ENCODE measurements at regions of chr17 and their contacts with region 1.

Region 1: GRCh38 chr17:21252796-21253645 is at the start of gene NATD1:
- DNase-seq: peak; percentile 64 to 92 (median 76)
- ATAC-seq: peak; percentile 80
- H3K4me3 ChIP-seq: peak within 1 kb of the TSS; percentile 67
- H3K4me3 Mint-ChIP-seq: peak within 1 kb of the TSS; percentile 93
- H3K27ac ChIP-seq: peak within 1 kb of the TSS; percentile 54 to 58
- H3K27ac Mint-ChIP-seq: peak within 1 kb of the TSS; percentile 94
- H3K4me1 ChIP-seq: peaks cover 27% of the 10 kb centered on the region
- H3K4me1 Mint-ChIP-seq: peaks cover 42% of the 10 kb centered on the region
- H3K27me3 ChIP-seq: no peaks in the 10 kb centered on the region
- H3K27me3 Mint-ChIP-seq: no peaks in the 10 kb centered on the region
- CTCF ChIP-seq: no peak
- total RNA-seq, gene NATD1: 5.9 to 6.1 TPM

Region 2: DNA sequence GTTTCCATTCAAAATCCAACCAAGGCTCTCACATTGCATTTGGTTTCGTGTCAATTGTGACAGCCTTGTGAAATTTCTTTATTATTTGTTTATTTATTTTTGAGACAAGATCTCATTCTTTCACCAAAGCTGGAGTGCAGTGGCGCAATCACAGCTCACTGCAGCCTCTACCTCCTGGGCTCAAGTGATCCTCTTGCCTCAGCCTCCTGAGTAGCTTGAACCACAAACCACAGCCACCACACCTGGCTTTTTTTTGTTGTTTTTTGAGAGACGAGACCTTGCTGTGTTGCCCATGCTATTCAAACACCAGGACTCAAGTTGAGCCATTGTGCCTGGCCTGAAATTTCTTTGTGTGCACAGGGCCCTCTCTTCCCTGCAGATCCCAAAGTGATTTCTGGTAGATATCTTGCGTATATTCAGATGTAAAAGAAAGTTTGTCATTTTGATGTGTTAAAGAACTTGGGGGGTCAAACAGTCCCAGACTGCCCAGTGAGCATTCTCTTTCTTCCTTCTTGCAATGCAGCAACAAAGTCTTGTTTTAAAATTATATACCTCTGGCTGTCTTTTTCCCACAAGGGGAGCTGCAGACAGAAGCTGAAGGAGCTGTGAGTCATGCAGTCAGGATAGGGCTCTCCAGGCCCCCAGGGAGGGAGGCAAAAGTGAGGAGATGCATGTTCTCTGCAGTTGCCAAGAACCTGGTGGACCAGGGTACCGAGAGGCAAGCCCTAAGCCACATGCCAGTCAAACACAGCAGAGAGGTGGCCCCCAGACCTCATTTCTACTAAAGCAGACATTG is 194.7 kb before region 1 on chr17:
- CTCF ChIA-PET with region 1: no interaction called
- POLR2A ChIA-PET with region 1: no interaction called
- intact Hi-C with region 1: no loop called
- DNase-seq: no peak
- ATAC-seq: no peak
- H3K4me3 ChIP-seq: no peak overlapping the region
- H3K4me3 Mint-ChIP-seq: no peak overlapping the region
- H3K27ac ChIP-seq: no peak overlapping the region
- H3K27ac Mint-ChIP-seq: no peak overlapping the region
- H3K4me1 ChIP-seq: no peaks in the 10 kb centered on the region
- H3K4me1 Mint-ChIP-seq: no peaks in the 10 kb centered on the region
- H3K27me3 ChIP-seq: peaks cover 0 to 4% of the 10 kb centered on the region in 2 experiments
- H3K27me3 Mint-ChIP-seq: peaks cover 13% of the 10 kb centered on the region
- CTCF ChIP-seq: no peak

Region 3: DNA sequence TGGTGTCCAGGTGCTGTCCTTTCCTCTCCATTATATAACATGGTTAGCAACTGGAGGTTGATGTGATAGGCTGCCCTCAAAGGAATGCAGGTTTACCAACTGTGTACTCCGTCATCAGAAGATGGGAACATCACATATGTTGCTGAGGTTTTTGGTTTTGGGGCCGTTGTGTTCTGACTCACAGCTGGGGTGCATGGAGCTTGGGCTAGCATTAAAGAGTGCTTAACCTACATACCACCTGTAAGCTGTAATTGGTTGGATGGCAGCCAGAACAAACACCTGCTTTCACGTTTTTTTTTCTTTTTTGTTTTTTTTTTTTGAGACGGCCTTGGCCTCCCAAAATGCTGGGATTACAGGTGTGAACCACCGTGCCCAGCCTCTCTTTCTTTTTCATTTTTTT is 60.0 kb before region 1 on chr17:
- CTCF ChIA-PET with region 1: no interaction called
- POLR2A ChIA-PET with region 1: no interaction called
- intact Hi-C with region 1: no loop called
- DNase-seq: no peak
- ATAC-seq: no peak
- H3K4me3 ChIP-seq: no peak overlapping the region
- H3K4me3 Mint-ChIP-seq: no peak overlapping the region
- H3K27ac ChIP-seq: no peak overlapping the region
- H3K27ac Mint-ChIP-seq: no peak overlapping the region
- H3K4me1 ChIP-seq: no peaks in the 10 kb centered on the region
- H3K4me1 Mint-ChIP-seq: peaks cover 6% of the 10 kb centered on the region
- H3K27me3 ChIP-seq: no peaks in the 10 kb centered on the region
- H3K27me3 Mint-ChIP-seq: no peaks in the 10 kb centered on the region
- CTCF ChIP-seq: no peak

Region 4: DNA sequence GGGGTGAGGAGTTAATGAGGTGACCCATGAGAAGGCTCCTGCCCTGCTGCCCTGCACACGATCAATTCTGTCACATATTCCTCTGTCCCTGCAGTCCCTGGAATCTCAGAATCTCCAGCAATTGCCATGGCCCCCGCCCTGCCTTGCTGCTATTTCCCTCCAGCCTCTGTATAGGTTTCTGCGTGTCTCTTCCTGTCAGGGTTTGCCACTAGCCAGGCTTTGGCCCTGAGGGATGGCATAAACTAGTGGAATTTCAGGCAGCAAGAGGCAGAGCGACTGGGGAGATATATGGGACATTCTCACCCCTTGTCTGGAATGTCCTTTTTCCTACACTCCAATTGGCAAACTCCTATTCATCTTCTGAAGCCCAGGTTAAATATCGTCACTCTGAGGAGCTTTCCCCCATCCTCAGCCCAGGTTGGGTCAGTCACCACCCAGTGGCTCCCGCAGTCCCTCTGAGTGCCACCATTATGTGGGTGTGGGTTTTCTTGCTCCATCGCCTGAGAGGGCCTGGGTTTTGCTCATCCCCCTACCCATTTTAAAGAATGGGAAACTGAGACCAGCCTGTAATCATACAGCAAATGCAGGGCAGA is 15.7 kb after region 1 on chr17:
- CTCF ChIA-PET with region 1: no interaction called
- POLR2A ChIA-PET with region 1: interaction called, 4 read pairs
- intact Hi-C with region 1: loop called in 1 of 2 experiments (anchors 2 kb)
- DNase-seq: no peak
- ATAC-seq: no peak
- H3K4me3 ChIP-seq: no peak overlapping the region
- H3K4me3 Mint-ChIP-seq: no peak overlapping the region
- H3K27ac ChIP-seq: peak overlapping the region; percentile 17 to 55
- H3K27ac Mint-ChIP-seq: peak overlapping the region; percentile 71
- H3K4me1 ChIP-seq: peaks cover 21% of the 10 kb centered on the region
- H3K4me1 Mint-ChIP-seq: peaks cover 28% of the 10 kb centered on the region
- H3K27me3 ChIP-seq: no peaks in the 10 kb centered on the region
- H3K27me3 Mint-ChIP-seq: no peaks in the 10 kb centered on the region
- CTCF ChIP-seq: no peak

Region 5: DNA sequence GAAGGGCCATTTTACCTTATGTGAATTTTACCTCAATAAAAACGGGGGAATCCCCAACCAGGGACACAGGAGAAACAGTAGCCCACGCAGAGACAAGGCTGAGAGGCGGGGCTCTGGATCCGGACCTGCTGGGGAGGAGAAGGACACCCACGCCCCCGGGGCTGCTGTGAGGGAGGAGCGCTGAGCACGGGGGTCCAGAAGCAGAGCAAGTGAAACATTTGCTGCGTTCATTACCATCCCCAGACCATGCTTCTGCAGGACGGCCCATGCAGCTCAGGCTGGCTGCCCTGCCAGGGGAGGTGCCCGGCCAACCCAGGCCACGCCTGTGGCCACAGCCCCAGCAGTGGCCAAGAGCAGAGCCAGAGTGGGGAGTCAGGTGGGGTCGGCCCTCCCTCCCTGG is 489.3 kb after region 1 on chr17:
- CTCF ChIA-PET with region 1: no interaction called
- POLR2A ChIA-PET with region 1: no interaction called
- intact Hi-C with region 1: no loop called
- DNase-seq: no peak
- ATAC-seq: no peak
- H3K4me3 ChIP-seq: no peak overlapping the region
- H3K4me3 Mint-ChIP-seq: no peak overlapping the region
- H3K27ac ChIP-seq: no peak overlapping the region
- H3K27ac Mint-ChIP-seq: no peak overlapping the region
- H3K4me1 ChIP-seq: no peaks in the 10 kb centered on the region
- H3K4me1 Mint-ChIP-seq: no peaks in the 10 kb centered on the region
- H3K27me3 ChIP-seq: no peaks in the 10 kb centered on the region
- H3K27me3 Mint-ChIP-seq: no peaks in the 10 kb centered on the region
- CTCF ChIP-seq: no peak